ENCODE measurements at regions of chr19 and their contacts with region 1.

Region 1: DNA sequence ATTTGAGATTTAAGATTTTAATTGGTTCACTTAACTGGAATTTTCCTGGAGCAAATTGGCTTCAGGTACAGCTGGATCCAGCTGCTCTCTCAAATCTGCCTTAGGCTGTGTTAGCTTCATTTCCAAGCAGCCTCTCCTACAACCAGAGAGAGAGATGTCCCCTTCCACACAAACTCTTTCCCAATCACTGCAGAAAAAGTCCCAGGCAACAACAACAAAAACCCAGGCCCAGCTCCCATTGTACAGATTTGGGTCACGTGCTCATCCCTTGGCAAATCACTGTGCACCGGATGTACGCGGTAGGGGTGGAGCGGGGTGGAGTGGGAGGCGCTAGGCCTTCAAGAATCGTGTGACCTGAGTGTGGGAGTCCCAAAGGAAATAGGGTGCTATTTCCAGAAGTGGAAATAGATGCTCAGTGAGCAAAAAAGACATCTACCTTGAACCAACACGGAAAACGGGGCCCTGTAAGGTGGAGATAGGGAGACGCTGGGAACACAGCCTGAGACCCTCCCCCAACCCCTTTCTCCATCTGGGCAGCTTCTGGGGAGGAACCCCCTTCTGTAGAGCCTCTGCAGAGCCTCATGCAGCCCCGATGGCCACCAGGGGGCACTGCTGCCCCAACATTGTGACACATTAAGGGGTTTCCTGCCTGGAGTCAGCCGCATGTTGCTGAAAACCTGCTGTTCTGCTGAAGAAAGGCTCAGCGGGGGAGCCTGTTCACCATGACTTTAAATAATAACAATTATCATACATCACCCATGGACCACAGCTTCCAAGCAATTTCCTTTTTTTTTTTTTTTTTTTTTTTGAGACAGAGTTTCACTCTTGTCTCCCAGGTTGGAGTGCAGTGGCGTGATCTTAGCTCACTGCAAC is 25.4 kb downstream of the HPN start:
- DNase-seq: peak; percentile 88
- H3K4me3 Mint-ChIP-seq: no peak overlapping the region
- H3K27ac Mint-ChIP-seq: peak overlapping the region; percentile 35
- H3K4me1 Mint-ChIP-seq: peaks cover 16% of the 10 kb centered on the region
- H3K27me3 Mint-ChIP-seq: peaks cover 6% of the 10 kb centered on the region

Region 2: DNA sequence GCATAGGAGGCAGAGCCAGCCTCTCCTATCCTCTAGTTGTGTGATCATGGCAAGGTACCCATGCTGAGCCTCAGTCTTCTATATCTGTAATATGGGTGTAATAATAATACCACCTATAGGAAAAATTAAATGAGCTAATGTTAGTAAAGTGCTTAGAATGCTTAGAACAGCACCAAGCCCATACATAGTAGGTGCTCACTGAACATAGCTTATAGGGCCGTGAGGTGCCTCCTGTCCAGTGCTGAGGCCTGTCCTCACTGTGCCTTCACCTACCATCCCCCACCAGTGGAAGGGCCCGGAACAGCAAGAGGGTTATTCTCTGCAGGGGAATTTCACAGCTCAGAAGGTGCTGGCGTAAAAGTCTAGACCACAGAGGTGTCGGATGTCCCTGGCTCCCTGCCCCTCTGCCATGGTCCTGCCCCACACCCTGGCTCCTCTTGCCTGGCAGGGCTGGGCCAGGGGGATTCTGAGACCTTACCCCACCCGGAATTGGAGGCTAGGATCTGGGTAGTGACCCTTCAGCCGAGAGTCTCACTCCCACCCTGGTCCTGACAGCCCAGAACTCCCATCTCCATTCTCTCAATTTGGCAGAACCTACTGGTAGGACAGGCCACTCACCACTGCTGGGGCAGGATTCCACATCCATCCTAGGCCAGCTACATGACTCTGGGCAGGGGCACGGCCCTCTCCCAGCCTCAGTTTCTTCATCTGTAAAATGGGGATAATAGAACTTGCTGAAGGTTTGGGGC is 38.9 kb before region 1 on chr19:
- CTCF ChIA-PET with region 1: no interaction called
- POLR2A ChIA-PET with region 1: no interaction called
- DNase-seq: no peak
- H3K4me3 Mint-ChIP-seq: no peak overlapping the region
- H3K27ac Mint-ChIP-seq: no peak overlapping the region
- H3K4me1 Mint-ChIP-seq: peaks cover 8% of the 10 kb centered on the region
- H3K27me3 Mint-ChIP-seq: peaks cover 20% of the 10 kb centered on the region

Region 3: DNA sequence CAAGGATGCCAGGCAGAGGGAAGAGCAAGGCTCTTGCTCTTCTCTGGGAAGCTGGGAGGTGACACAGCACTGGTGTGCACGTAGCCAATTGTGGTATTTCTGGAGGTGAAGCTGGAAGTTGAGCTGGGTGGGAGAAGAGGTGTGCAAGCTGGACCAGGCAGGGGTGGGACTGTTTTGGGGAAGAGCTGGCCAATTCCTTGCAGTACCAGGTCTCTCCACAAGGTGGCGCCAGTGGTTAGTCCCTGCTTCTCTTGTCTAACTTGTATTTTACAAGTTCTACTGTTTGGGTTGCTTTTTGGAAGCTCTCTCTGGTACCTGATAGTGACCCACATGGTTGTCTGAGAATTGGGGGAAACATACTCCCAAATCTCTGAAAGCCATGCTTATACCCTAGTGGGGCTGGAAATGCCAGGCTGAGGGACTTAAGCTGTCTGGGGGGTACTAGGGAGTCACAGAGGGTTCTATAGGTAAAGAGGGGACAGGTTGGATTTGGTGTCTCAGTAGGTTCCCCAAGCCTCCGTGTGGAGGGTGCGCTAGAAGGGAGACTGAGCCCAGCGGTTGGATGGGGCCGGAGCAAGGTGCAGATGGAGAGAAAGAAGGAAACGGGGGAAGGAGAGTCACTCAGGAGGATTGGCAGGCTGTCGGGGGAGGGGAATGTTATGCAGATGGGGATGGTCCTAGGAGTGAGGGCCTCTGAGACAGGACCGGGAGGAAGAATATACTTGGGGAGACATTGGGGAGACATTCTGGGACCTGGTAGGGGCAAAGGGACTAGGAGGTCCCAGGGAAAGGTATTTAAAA is 22.4 kb before region 1 on chr19:
- CTCF ChIA-PET with region 1: interaction called, 11 read pairs
- POLR2A ChIA-PET with region 1: no interaction called
- DNase-seq: peak; percentile 64
- H3K4me3 Mint-ChIP-seq: no peak overlapping the region
- H3K27ac Mint-ChIP-seq: no peak overlapping the region
- H3K4me1 Mint-ChIP-seq: peaks cover 28% of the 10 kb centered on the region
- H3K27me3 Mint-ChIP-seq: peaks cover 9% of the 10 kb centered on the region

Region 4: GRCh38 chr19:35055715-35056179 is 11.2 kb before region 1 on chr19:
- CTCF ChIA-PET with region 1: interaction called, 10 read pairs
- POLR2A ChIA-PET with region 1: no interaction called
- DNase-seq: no peak
- H3K4me3 Mint-ChIP-seq: no peak overlapping the region
- H3K27ac Mint-ChIP-seq: no peak overlapping the region
- H3K4me1 Mint-ChIP-seq: no peaks in the 10 kb centered on the region
- H3K27me3 Mint-ChIP-seq: peaks cover 6% of the 10 kb centered on the region

Region 5: GRCh38 chr19:35135389-35135909 is 68.5 kb after region 1 on chr19:
- CTCF ChIA-PET with region 1: interaction called, 12 read pairs
- POLR2A ChIA-PET with region 1: no interaction called
- DNase-seq: peak; percentile 72
- H3K4me3 Mint-ChIP-seq: no peak overlapping the region
- H3K27ac Mint-ChIP-seq: no peak overlapping the region
- H3K4me1 Mint-ChIP-seq: peaks cover 6% of the 10 kb centered on the region
- H3K27me3 Mint-ChIP-seq: peaks cover 17% of the 10 kb centered on the region

Measured in activated CD4-positive, alpha-beta memory T cell treated with anti-CD3 and anti-CD28 coated beads, Interleukin-2, amount 10 ng/mL, durations not matched to agents 7 days and 5 days (primary cell).